AG04449 (cell line): ENCODE measurements at regions of chr2 and their contacts with region 1.

Region 1: GRCh38 chr2:168948621-168949212 is 47.6 kb downstream of the G6PC2 start:
- DNase-seq: no peak
- H3K4me3 ChIP-seq: no peak overlapping the region
- CTCF ChIP-seq: peak; percentile 48

Region 2: DNA sequence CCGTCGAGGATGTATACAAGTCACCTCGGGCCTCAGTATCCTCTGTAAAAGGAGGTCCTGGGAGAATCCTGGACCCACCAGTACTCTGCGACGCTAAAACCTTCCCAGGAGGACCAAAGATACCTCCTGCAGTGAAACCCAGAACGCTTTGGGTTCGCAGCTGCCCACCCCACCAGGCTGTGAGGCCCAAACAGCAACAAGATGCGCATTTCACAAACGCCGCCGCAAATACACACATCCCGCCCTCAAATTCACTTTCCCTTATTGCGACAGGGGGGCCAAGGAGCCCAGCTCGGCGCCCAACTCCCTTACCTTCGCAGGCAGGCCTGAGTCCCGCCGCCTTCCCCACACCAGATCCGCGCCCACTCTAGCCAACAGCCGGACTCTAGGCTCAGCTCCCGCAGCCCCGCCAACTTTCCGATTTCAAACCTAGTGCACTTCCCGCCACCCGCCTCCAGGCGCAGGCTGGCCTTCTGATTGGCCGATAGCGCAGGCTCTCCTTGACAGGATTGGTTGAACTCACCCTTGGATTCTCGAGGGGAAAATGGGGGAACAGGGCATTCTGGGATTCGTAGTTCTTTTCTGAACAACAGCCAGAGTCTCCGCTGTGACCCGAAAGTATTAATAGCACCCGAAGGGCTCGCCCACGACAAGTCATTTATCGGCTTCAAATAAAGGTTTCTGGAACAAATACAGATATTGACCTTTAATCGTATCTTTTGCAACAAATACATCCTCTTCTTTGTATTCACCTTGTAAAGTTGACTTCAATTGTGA is 58.5 kb before region 1 on chr2 and contains the start of gene SPC25:
- CTCF ChIA-PET with region 1: no interaction called
- POLR2A ChIA-PET with region 1: no interaction called
- DNase-seq: peak; percentile 31
- H3K4me3 ChIP-seq: peak within 1 kb of the TSS; percentile 85
- CTCF ChIP-seq: no peak

Region 3: DNA sequence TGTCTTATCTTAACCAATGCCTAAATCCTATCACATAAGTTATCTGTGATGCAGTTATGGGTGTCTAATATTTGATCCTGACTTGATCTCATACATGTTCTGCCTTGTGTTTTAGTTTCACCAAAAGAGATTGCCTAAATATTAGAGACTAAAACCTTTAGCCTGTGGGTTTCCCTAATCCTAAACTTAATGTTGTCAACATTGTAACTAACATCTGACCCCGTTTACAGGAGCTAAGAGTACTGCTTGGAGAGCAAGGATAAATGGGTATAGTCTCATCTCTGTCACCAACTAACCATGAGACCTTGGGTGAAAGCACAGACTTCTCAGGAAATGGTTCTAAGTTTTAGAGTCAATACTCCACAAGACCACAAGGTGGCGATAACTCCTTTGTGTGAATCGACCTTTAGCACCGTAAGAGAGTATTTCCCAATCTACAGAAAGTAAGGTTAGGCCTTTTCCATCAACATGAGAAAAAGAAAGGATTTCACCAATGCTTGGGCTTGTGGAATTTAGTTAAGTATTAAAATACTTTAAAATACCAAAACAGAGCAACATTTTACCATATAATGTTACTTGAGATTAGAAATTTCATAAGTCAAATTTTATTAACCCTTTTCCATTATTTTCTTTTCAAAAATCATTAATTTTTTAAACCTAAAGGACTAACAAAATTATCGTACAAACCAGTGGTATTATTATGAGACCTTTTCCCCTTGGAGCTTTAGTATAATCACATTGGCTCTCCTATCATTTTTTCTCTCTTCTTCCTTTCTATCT is 12.9 kb after region 1 on chr2:
- CTCF ChIA-PET with region 1: interaction called, 14 read pairs
- POLR2A ChIA-PET with region 1: no interaction called
- DNase-seq: peak; percentile 33
- H3K4me3 ChIP-seq: no peak overlapping the region
- CTCF ChIP-seq: peak; percentile 80

Region 4: GRCh38 chr2:169159686-169160085 is 211.0 kb after region 1 on chr2:
- CTCF ChIA-PET with region 1: no interaction called
- POLR2A ChIA-PET with region 1: no interaction called
- DNase-seq: no peak
- H3K4me3 ChIP-seq: no peak overlapping the region
- CTCF ChIP-seq: no peak